Ovary (tissue), 10 donors: ENCODE measurements at regions of chr10 and their contacts with region 1.

Region 1: DNA sequence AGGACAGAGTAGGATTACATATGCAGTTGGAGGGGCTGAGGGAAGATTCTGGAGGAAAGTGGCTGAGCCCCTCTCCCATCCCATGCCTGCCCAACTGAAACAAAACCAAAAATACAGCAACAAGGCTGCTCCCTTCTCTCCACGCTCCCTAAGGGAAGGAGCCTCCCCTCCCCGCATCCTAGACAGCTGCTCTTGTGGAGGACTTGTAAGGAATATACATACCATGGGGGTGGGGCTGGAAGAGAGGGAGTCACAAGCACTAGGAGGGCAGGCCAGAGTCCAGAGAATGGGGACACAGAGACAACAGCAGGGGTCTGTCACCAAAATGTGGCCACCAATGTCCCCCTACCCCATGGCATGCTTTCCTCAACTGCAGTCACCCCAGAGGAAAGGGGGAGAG is 13.2 kb downstream of the LDB1 start:
- DNase-seq: no peak
- H3K4me3 ChIP-seq: no peak overlapping the region
- H3K27ac ChIP-seq: no peak overlapping the region
- H3K4me1 ChIP-seq: no peaks in the 10 kb centered on the region
- H3K27me3 ChIP-seq: no peaks in the 10 kb centered on the region
- CTCF ChIP-seq: no peak
- EP300 ChIP-seq: no peak
- POLR2A ChIP-seq: no peak

Region 2: DNA sequence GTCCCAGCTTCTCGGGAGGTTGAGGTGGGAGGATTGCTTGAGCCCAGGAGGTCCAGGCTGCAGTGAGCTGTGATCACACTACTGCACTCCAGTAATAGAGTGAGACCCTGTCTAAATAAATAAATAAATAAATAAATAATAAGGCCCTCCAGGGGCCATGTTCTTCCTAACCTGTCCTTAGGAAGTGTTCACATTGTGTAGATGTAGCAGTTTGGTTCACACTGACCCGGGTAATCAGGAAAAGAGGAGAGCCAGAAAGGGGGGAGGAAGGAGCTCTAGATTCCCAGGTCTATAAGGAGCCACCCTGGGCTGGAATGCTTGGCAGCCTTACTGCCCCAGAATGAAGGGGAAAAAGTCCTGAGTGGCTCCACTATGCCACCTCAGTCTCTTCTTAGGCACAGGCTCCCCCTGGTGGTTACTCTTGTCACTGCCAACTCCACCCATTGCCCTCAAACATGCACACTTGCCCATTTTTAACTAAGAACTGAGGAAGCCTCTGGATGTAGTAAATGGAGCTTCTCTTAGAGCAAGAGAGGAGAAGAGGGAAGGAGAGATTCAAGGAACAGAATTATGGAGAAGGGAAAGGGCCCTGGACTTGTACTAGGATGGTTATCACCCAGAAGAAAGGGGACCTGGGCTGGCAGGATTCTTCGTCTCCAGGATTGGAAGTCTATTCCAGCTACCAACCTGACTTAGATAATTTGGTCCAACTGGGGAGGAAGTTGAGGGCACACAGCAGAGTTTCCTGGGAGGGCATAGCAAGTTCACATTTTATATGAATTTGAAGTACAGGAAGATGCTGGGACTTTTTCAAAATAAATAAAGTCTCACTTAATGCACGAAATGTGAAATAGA is 34.1 kb before region 1 on chr10:
- intact Hi-C with region 1: loop called in 2 of 4 experiments (anchors 5 to 10 kb)
- DNase-seq: peak; percentile 65 to 84 (median 80)
- H3K4me3 ChIP-seq: no peak overlapping the region
- H3K27ac ChIP-seq: no peak overlapping the region
- H3K4me1 ChIP-seq: no peaks in the 10 kb centered on the region
- H3K27me3 ChIP-seq: no peaks in the 10 kb centered on the region
- CTCF ChIP-seq: peak; percentile 74 to 76 (median 74)
- EP300 ChIP-seq: no peak
- POLR2A ChIP-seq: no peak